ENCODE measurements at regions of chr17 and their contacts with region 1.

Region 1: DNA sequence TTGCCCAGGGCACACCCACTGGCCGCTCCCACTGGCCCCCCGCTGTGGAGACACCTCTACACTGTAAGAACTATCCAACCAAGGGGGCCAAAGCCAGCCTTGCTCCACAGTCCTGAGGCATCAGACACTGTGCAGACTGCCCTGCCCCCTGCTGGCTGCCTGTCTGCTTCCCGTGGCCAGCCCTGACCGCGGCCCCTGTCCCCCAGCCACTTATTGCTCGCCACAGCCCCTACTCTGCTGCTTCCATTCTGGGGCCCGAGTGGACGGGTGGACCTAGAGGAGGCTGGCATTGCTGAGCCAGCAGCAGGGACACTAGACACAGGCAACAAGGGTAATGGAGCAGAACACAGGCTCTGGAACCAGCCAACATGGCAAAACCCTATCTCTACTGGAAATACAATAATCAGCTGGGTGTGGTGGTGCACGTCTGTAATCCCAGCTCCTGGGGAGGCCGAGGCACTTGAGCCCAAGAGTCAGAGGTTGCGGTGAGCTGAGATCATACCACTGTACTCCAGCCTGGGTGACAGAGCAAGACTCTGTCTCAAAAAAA is 19.7 kb upstream of the LRRC37A3 start:
- DNase-seq: peak; percentile 25 to 85
- H3K4me3 ChIP-seq: no peak overlapping the region
- H3K27ac ChIP-seq: no peak overlapping the region
- H3K4me1 ChIP-seq: no peaks in the 10 kb centered on the region
- H3K27me3 ChIP-seq: no peaks in the 10 kb centered on the region
- CTCF ChIP-seq: peak; percentile 71 to 91 (median 72)
- EP300 ChIP-seq: no peak
- POLR2A ChIP-seq: no peak
- RAD21 ChIP-seq: peak; percentile 65 to 76

Region 2: GRCh38 chr17:64736804-64737492 is 202.1 kb before region 1 on chr17:
- CTCF ChIA-PET with region 1: no interaction called
- POLR2A ChIA-PET with region 1: no interaction called
- DNase-seq: peak in 1 of 2 experiments; percentile 55
- H3K4me3 ChIP-seq: no peak overlapping the region
- H3K27ac ChIP-seq: no peak overlapping the region
- H3K4me1 ChIP-seq: peaks cover 0 to under 1% (median 0%) of the 10 kb centered on the region in 4 experiments; a peak in 1 of 7 replicates
- H3K27me3 ChIP-seq: no peaks in the 10 kb centered on the region
- CTCF ChIP-seq: peak in 2 of 3 experiments; percentile 57 to 65; a peak in 3 of 4 replicates
- EP300 ChIP-seq: no peak
- POLR2A ChIP-seq: no peak
- RAD21 ChIP-seq: peak; percentile 63 to 73

Region 3: GRCh38 chr17:64950871-64951270 is 11.9 kb after region 1 on chr17:
- CTCF ChIA-PET with region 1: interaction called, 15 read pairs
- POLR2A ChIA-PET with region 1: no interaction called
- DNase-seq: no peak
- H3K4me3 ChIP-seq: no peak overlapping the region
- H3K27ac ChIP-seq: no peak overlapping the region
- H3K4me1 ChIP-seq: no peaks in the 10 kb centered on the region
- H3K27me3 ChIP-seq: no peaks in the 10 kb centered on the region
- CTCF ChIP-seq: no peak
- EP300 ChIP-seq: no peak
- POLR2A ChIP-seq: no peak
- RAD21 ChIP-seq: no peak

Region 4: GRCh38 chr17:64968652-64969501 is 29.9 kb after region 1 on chr17:
- CTCF ChIA-PET with region 1: interaction called, 53 read pairs
- POLR2A ChIA-PET with region 1: no interaction called
- DNase-seq: no peak
- H3K4me3 ChIP-seq: no peak overlapping the region
- H3K27ac ChIP-seq: no peak overlapping the region
- H3K4me1 ChIP-seq: no peaks in the 10 kb centered on the region
- H3K27me3 ChIP-seq: no peaks in the 10 kb centered on the region; a peak in 1 of 7 replicates
- CTCF ChIP-seq: no peak
- EP300 ChIP-seq: no peak
- POLR2A ChIP-seq: no peak
- RAD21 ChIP-seq: no peak

Measured in H1 (cell line).